ENCODE measurements at regions of chr18 and their contacts with region 1.

Region 1: DNA sequence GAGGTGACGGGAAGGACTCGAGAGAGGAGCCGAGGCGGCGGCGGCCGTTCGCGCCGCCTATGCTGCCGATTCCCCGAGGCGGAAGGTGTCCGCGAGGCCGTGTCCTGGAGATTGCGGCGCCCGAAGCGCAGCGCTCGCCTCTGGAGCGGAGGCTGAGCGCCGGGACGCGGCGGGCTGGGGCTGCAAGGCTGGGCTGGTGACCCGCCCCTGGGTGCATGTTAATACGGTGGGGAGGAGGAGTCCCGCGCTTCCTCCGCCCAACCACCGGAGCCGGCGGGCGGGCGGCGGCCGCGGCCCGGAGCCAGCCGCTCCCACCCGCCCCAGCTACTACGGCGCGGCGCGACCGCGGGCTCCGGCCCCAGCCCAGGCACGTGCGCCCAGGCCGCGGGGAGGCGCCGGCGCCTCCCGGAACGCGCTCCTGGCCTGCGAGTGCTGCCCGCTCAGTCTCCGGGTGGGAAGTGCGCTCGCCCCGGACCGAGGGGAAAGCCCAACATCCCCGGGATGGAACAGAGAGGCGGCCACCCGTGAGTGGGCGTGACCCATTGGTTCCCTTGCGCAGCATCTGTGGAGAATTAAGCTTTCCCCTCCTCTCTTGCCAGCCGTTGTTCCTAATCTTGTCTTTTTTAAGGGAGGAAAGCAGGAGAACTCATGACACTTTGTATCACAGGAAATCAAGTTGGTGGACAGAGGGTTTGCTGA is at the start of gene DLGAP1:
- DNase-seq: peak; percentile 1
- ATAC-seq: peak; percentile 91
- H3K4me3 ChIP-seq: no peak within 1 kb of the TSS; a peak in 1 of 6 replicates
- H3K27ac ChIP-seq: no peak within 1 kb of the TSS
- H3K4me1 ChIP-seq: no peaks in the 10 kb centered on the region
- H3K27me3 ChIP-seq: peaks cover 0 to 19% of the 10 kb centered on the region in 2 experiments; a peak in 2 of 5 replicates
- CTCF ChIP-seq: no peak
- EP300 ChIP-seq: no peak
- POLR2A ChIP-seq: no peak
- RAD21 ChIP-seq: no peak
- total RNA-seq, gene DLGAP1: not detected in 2 replicates

Region 2: GRCh38 chr18:3773303-3773702 is 682.0 kb before region 1 on chr18:
- CTCF ChIA-PET with region 1: no interaction called
- POLR2A ChIA-PET with region 1: no interaction called
- in situ Hi-C with region 1: no loop called
- intact Hi-C with region 1: no loop called
- DNase-seq: no peak
- ATAC-seq: no peak
- H3K4me3 ChIP-seq: no peak overlapping the region
- H3K27ac ChIP-seq: no peak overlapping the region
- H3K4me1 ChIP-seq: no peaks in the 10 kb centered on the region
- H3K27me3 ChIP-seq: peaks cover 0 to 18% of the 10 kb centered on the region in 2 experiments; a peak in 2 of 5 replicates
- CTCF ChIP-seq: no peak
- EP300 ChIP-seq: no peak
- POLR2A ChIP-seq: no peak
- RAD21 ChIP-seq: no peak

Region 3: DNA sequence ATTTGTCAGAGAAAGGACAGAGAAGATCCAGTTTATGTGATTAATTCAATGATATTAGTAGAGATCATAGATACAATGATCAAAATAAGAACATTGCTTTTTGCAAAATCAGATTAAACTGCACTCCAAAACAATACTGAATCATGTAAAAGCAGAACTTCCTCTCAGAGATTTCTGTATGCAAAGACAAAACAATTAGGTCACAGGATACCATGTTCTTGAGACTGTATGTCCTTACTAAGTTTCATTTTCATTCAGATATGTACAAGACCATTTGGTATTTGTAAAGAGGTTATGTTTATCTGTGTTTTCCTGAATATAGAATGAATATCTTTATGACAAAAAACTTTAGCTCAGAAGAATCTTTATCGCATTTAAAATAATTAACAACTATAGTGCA is 161.9 kb before region 1 on chr18:
- CTCF ChIA-PET with region 1: no interaction called
- POLR2A ChIA-PET with region 1: no interaction called
- in situ Hi-C with region 1: no loop called
- intact Hi-C with region 1: no loop called
- DNase-seq: no peak
- ATAC-seq: no peak
- H3K4me3 ChIP-seq: no peak overlapping the region
- H3K27ac ChIP-seq: no peak overlapping the region
- H3K4me1 ChIP-seq: no peaks in the 10 kb centered on the region
- H3K27me3 ChIP-seq: no peaks in the 10 kb centered on the region; a peak in 1 of 5 replicates
- CTCF ChIP-seq: no peak
- EP300 ChIP-seq: no peak
- POLR2A ChIP-seq: no peak
- RAD21 ChIP-seq: no peak

Region 4: DNA sequence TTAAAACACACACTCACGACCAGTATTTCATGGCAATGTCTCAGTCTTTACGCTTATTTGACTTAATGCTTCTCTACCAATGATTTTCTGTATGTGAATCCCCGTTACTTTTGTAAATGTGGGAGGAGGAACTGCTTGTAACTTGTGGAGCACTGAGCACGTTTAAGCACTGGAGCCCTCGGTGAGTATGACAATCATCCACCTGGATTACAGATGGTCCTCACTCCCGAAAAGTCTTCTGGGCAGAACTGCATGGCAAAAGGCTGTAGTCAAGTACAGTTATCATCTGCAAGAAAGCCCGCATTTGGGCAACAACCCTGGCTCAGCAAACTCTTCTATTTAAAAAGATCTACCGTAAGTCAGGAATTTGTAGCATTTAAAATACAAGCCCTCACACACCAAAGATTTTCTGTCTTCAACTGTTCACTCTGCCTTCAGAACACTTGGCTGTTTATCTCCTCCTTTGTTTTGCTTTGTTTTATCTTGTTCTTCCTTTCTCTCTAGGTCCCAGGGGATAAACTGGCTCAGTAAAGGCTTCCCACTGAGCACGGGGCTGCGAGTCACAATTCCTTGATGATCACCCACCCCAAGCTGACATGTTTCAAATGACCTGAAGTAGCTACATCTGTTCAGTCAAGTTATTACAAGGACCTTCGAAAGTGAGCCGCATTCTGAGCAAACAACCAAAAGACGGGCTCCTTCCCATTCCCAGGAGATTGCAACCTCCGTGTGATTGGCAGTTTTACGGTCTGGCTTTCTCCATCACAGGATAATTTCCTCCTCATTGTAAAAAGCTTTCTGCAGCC is 102.3 kb before region 1 on chr18:
- CTCF ChIA-PET with region 1: no interaction called
- POLR2A ChIA-PET with region 1: no interaction called
- in situ Hi-C with region 1: no loop called
- intact Hi-C with region 1: no loop called
- DNase-seq: no peak
- ATAC-seq: no peak
- H3K4me3 ChIP-seq: no peak overlapping the region
- H3K27ac ChIP-seq: no peak overlapping the region
- H3K4me1 ChIP-seq: no peaks in the 10 kb centered on the region
- H3K27me3 ChIP-seq: peaks cover 0 to 3% of the 10 kb centered on the region in 2 experiments; a peak in 1 of 5 replicates
- CTCF ChIP-seq: no peak
- EP300 ChIP-seq: no peak
- POLR2A ChIP-seq: no peak
- RAD21 ChIP-seq: no peak

Region 5: DNA sequence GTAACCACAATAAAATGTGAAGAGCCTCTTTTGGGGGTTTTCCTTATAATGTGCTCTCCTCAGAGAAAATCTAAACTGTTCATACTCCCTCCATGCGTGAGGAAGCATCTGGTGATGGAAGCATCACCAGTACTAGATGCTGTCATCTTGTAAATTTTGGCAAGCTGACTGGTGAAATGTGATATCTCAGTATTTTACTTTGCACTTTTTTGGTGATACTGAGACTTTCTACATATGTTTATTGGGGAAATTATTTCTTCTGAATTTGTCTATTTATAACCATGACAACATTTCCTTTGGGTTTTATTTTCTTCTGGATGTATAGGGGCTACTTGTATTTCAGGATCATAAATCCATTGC is 95.7 kb after region 1 on chr18:
- CTCF ChIA-PET with region 1: no interaction called
- POLR2A ChIA-PET with region 1: no interaction called
- in situ Hi-C with region 1: loop called (anchors 25 kb)
- intact Hi-C with region 1: no loop called
- DNase-seq: no peak
- ATAC-seq: no peak
- H3K4me3 ChIP-seq: no peak overlapping the region
- H3K27ac ChIP-seq: no peak overlapping the region
- H3K4me1 ChIP-seq: no peaks in the 10 kb centered on the region
- H3K27me3 ChIP-seq: no peaks in the 10 kb centered on the region
- CTCF ChIP-seq: no peak
- EP300 ChIP-seq: no peak
- POLR2A ChIP-seq: no peak
- RAD21 ChIP-seq: no peak

Region 6: DNA sequence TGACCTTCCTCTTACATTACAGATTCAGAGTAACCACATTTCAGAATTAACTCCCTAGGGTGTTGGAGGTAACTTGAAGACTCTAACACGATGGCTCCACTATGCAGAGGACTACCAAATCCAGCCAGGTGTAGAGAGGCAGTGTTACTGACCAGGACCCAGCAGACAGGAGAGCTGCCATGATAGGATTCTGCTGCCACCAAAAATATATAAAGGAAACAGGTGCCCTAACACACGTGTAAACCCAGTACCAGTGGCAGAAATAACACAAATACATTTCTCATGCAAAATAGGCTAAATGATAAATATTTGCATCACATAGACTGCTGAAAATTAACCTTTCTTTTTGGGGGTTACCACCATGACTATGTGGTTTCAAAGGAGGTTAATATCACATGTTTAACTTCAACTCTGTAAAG is 833.3 kb after region 1 on chr18:
- CTCF ChIA-PET with region 1: no interaction called
- POLR2A ChIA-PET with region 1: no interaction called
- in situ Hi-C with region 1: no loop called
- intact Hi-C with region 1: no loop called
- DNase-seq: no peak
- ATAC-seq: no peak
- H3K4me3 ChIP-seq: no peak overlapping the region
- H3K27ac ChIP-seq: no peak overlapping the region
- H3K4me1 ChIP-seq: peaks cover 5% of the 10 kb centered on the region
- H3K27me3 ChIP-seq: no peaks in the 10 kb centered on the region
- CTCF ChIP-seq: no peak
- EP300 ChIP-seq: no peak
- POLR2A ChIP-seq: no peak
- RAD21 ChIP-seq: no peak